ENCODE measurements at regions of chr15 and their contacts with region 1.

Region 1: DNA sequence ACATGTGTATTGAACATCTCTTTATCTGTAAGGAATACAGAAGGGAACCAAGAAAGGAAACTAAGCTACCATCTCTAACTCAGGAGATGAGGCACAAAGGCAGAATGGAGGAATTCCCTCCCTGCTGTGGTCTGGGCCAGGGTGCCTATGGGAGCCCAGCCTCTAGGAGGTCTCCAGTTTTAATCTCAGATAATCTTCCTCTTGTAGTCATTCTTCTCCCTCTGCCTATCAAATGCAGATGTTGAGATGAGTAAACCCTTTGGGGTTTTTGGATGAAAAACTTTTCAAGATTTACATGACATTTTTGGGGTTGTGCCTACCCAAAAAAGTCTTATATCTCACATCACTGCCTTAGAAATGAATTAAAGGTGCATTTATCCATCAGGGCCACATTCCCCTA is 23.3 kb downstream of the SCG5 start:
- DNase-seq: no peak
- ATAC-seq: no peak
- H3K4me3 ChIP-seq: no peak overlapping the region
- H3K27ac ChIP-seq: no peak overlapping the region
- H3K4me1 ChIP-seq: peaks cover 6% of the 10 kb centered on the region
- H3K27me3 ChIP-seq: no peaks in the 10 kb centered on the region
- CTCF ChIP-seq: no peak

Region 2: DNA sequence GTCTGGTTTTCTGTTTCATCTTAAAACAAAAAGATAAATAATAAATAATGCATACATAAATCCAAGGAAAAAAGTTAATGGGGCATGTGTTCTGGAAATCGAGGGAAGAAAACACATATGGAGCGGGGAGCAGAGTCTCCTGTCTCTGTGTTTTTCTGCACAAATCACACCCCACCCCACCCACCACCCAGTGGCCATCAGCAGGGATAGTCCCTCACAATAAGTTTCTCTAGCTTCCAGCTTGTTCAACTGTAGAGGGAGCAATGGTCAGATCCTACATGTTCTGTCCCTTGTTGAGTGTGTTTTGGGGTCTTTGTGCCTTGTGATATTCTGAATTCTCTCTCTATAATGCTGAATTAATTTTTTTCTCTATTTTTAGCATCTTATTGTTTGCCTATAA is 661.2 kb before region 1 on chr15:
- intact Hi-C with region 1: no loop called
- DNase-seq: no peak
- ATAC-seq: no peak
- H3K4me3 ChIP-seq: no peak overlapping the region
- H3K27ac ChIP-seq: no peak overlapping the region
- H3K4me1 ChIP-seq: no peaks in the 10 kb centered on the region
- H3K27me3 ChIP-seq: no peaks in the 10 kb centered on the region
- CTCF ChIP-seq: no peak

Region 3: GRCh38 chr15:32704395-32704981 is 39.7 kb after region 1 on chr15:
- intact Hi-C with region 1: loop called in 1 of 2 experiments (anchors 2 kb)
- DNase-seq: no peak
- ATAC-seq: no peak
- H3K4me3 ChIP-seq: no peak overlapping the region
- H3K27ac ChIP-seq: no peak overlapping the region
- H3K4me1 ChIP-seq: no peaks in the 10 kb centered on the region
- H3K27me3 ChIP-seq: peaks cover 0 to 5% (median 4%) of the 10 kb centered on the region in 3 donors
- CTCF ChIP-seq: no peak

Region 4: DNA sequence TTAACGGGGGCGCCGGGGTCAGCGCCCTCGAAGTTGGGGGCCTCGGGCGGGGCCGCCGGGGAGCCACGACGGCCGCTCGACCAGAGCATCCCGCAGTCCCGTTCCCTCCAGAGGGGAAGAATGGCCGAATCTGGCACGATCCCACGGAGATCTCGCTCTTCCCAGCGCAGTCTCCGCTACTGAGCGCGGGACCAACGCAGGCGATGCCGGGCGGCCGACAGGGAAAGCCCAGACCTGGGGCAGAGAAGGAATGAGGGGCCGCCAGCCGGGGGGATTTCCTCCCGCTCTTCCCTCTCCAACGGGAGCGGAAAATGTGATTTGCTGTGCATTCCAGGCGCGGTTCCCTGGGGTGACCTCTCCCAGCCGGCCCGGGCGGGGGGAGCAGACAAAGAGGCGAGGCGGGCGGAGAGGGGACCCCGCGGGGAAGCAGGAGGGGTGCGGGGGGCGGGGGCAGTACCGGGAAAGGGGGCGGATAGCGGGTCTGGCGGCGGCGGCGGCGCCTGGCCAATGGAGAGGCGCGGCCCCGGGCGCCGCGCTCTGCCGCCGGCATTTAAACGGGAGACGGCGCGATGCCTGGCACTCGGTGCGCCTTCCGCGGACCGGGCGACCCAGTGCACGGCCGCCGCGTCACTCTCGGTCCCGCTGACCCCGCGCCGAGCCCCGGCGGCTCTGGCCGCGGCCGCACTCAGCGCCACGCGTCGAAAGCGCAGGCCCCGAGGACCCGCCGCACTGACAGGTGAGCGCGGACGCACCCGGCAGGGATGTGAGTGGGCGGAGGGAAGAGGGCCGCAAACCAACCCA is 52.8 kb after region 1 on chr15 and contains the start of gene GREM1:
- intact Hi-C with region 1: no loop called
- DNase-seq: peak; percentile 15 to 56
- ATAC-seq: peak in 2 of 4 donors; percentile 26 to 40
- H3K4me3 ChIP-seq: peak within 1 kb of the TSS; percentile 52
- H3K27ac ChIP-seq: no peak within 1 kb of the TSS
- H3K4me1 ChIP-seq: peaks cover 4% of the 10 kb centered on the region
- H3K27me3 ChIP-seq: peaks cover 5 to 76% (median 8%) of the 10 kb centered on the region in 3 donors
- CTCF ChIP-seq: no peak
- total RNA-seq, gene GREM1: 0.60 to 4.5 (median 1.7) TPM

Measured in psoas muscle (tissue), 8 donors.